Activated naive CD8-positive, alpha-beta T cell treated with anti-CD3 and anti-CD28 coated beads, Interleukin-2, amount 10 ng/mL, durations not matched to agents 7 days and 5 days (primary cell): ENCODE measurements at regions of chr16 and their contacts with region 1.

Region 1: GRCh38 chr16:87853411-87854052 is 15.8 kb downstream of the SLC7A5 start:
- DNase-seq: peak; percentile 86
- ATAC-seq: peak; percentile 59
- H3K4me3 Mint-ChIP-seq: peak overlapping the region; percentile 63
- H3K27ac Mint-ChIP-seq: peak overlapping the region; percentile 92
- H3K4me1 Mint-ChIP-seq: peaks cover 21% of the 10 kb centered on the region
- H3K27me3 Mint-ChIP-seq: no peaks in the 10 kb centered on the region

Region 2: DNA sequence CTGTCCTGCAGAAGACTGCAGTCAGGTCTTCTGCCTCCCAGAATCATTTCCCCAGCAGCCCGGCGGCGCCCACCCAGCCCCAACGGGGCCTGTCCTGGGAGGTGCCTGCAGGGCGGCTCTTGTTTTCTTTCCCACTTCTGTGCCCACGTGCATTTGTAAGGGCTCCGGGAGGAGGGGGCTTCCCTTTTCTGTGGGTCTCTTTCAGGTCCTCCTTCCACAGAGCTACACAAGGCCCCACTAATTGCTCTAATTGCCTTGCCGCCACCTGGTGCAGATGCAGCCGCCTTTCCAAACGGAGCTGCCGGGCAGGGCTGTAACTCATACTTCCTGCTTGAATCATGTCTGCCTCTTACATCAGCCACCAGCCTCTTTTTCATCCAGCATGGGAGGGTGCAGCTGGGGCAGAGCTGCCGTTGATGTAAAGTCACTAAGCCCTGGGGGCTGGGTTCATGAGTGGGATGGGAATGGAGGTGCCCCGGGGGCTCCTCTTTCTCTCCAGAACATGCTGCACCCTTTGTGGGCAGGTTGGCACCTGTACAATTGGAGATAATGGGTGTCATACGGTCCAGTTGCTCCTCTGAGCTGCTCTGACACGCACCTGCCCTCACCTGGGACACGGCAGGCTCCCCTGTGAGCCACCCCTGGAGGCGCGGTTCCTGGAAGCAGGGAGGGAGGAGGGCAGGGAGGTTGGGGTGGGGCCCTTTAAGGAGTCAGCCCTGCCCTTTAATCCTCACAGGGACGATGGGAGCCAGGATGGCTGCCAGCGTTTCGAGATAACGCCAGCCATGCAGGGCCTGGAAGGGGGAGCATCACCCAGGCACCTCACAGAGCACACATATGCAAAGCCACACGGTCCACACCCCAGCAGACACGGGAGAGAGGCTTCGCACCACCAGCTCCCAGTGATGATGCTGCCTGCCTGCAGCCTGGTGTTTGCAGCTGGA is 46.7 kb before region 1 on chr16:
- POLR2A ChIA-PET with region 1: interaction called, 15 read pairs
- DNase-seq: peak; percentile 72
- ATAC-seq: peak; percentile 87
- H3K4me3 Mint-ChIP-seq: peak overlapping the region; percentile 83
- H3K27ac Mint-ChIP-seq: peak overlapping the region; percentile 100
- H3K4me1 Mint-ChIP-seq: peaks cover 29% of the 10 kb centered on the region
- H3K27me3 Mint-ChIP-seq: no peaks in the 10 kb centered on the region

Region 3: GRCh38 chr16:87956365-87957231 is 103.1 kb after region 1 on chr16:
- POLR2A ChIA-PET with region 1: no interaction called
- DNase-seq: peak; percentile 71
- ATAC-seq: peak; percentile 65
- H3K4me3 Mint-ChIP-seq: peak overlapping the region; percentile 84
- H3K27ac Mint-ChIP-seq: peak overlapping the region; percentile 97
- H3K4me1 Mint-ChIP-seq: peaks cover 51% of the 10 kb centered on the region
- H3K27me3 Mint-ChIP-seq: no peaks in the 10 kb centered on the region

Region 4: GRCh38 chr16:88115732-88116523 is 262.4 kb after region 1 on chr16:
- POLR2A ChIA-PET with region 1: no interaction called
- DNase-seq: no peak
- ATAC-seq: no peak
- H3K4me3 Mint-ChIP-seq: no peak overlapping the region
- H3K27ac Mint-ChIP-seq: no peak overlapping the region
- H3K4me1 Mint-ChIP-seq: peaks cover 8% of the 10 kb centered on the region
- H3K27me3 Mint-ChIP-seq: no peaks in the 10 kb centered on the region